ENCODE measurements at regions of chr5 and their contacts with region 1.

Region 1: GRCh38 chr5:170571875-170572852 is 68.3 kb downstream of the KCNIP1 start:
- DNase-seq: peak; percentile 90
- ATAC-seq: peak; percentile 97
- H3K4me3 Mint-ChIP-seq: no peak overlapping the region
- H3K27ac Mint-ChIP-seq: no peak overlapping the region
- H3K4me1 Mint-ChIP-seq: peaks cover 20% of the 10 kb centered on the region
- H3K27me3 Mint-ChIP-seq: peaks cover 62% of the 10 kb centered on the region

Region 2: DNA sequence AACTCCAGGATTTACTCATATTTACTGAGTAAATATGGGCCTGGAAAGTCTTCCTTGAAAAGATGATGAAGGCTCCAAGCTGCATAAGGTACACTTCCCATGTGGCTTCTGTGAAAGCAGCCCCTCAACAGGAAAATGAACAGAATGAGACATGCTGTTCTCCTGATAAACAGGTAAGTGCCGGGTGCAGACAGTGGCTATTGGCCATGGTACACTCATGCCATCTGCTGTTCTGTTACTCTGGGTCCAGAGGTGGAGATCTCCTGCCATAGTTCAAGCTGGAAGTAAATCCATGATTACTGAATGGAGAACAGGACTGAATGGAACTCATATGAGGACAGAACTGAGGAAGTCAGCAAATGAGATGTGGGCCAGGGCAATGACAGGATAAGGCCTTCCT is 1374.8 kb before region 1 on chr5:
- CTCF ChIA-PET with region 1: no interaction called
- POLR2A ChIA-PET with region 1: no interaction called
- intact Hi-C with region 1: no loop called
- DNase-seq: no peak
- ATAC-seq: no peak
- H3K4me3 Mint-ChIP-seq: no peak overlapping the region
- H3K27ac Mint-ChIP-seq: no peak overlapping the region
- H3K4me1 Mint-ChIP-seq: no peaks in the 10 kb centered on the region
- H3K27me3 Mint-ChIP-seq: no peaks in the 10 kb centered on the region

Region 3: GRCh38 chr5:170006021-170006420 is 566.1 kb before region 1 on chr5:
- CTCF ChIA-PET with region 1: no interaction called
- POLR2A ChIA-PET with region 1: no interaction called
- intact Hi-C with region 1: no loop called
- DNase-seq: no peak
- ATAC-seq: no peak
- H3K4me3 Mint-ChIP-seq: no peak overlapping the region
- H3K27ac Mint-ChIP-seq: no peak overlapping the region
- H3K4me1 Mint-ChIP-seq: no peaks in the 10 kb centered on the region
- H3K27me3 Mint-ChIP-seq: no peaks in the 10 kb centered on the region

Region 4: DNA sequence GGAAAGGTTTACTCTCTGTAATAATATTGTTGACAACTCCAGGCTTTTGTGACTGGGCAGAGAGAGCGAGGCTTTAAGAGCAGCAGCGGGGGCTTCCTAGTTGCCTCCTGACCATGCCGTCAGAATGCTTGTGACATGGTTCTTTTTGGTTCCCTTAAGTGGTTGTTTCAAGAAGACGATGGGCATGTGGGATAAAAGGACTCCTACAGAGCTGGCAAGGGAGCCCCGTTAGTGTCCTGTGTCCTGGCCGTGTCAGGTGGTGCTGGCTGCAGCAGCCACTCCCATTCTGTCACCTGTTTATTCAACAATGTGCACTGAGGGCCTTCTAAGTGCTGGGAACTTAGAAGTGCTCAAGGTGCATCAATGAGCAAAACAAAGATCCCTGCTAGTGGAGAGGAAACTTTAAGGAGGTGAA is 294.3 kb before region 1 on chr5:
- CTCF ChIA-PET with region 1: no interaction called
- POLR2A ChIA-PET with region 1: no interaction called
- intact Hi-C with region 1: no loop called
- DNase-seq: no peak
- ATAC-seq: no peak
- H3K4me3 Mint-ChIP-seq: peak overlapping the region; percentile 49
- H3K27ac Mint-ChIP-seq: peak overlapping the region; percentile 92
- H3K4me1 Mint-ChIP-seq: peaks cover 97% of the 10 kb centered on the region
- H3K27me3 Mint-ChIP-seq: no peaks in the 10 kb centered on the region

Region 5: GRCh38 chr5:170466988-170467707 is 105.0 kb before region 1 on chr5:
- CTCF ChIA-PET with region 1: no interaction called
- POLR2A ChIA-PET with region 1: no interaction called
- intact Hi-C with region 1: loop called (anchors 1 to 5 kb)
- DNase-seq: peak; percentile 74
- ATAC-seq: peak; percentile 98
- H3K4me3 Mint-ChIP-seq: no peak overlapping the region
- H3K27ac Mint-ChIP-seq: no peak overlapping the region
- H3K4me1 Mint-ChIP-seq: no peaks in the 10 kb centered on the region
- H3K27me3 Mint-ChIP-seq: peaks cover 12% of the 10 kb centered on the region

Region 6: DNA sequence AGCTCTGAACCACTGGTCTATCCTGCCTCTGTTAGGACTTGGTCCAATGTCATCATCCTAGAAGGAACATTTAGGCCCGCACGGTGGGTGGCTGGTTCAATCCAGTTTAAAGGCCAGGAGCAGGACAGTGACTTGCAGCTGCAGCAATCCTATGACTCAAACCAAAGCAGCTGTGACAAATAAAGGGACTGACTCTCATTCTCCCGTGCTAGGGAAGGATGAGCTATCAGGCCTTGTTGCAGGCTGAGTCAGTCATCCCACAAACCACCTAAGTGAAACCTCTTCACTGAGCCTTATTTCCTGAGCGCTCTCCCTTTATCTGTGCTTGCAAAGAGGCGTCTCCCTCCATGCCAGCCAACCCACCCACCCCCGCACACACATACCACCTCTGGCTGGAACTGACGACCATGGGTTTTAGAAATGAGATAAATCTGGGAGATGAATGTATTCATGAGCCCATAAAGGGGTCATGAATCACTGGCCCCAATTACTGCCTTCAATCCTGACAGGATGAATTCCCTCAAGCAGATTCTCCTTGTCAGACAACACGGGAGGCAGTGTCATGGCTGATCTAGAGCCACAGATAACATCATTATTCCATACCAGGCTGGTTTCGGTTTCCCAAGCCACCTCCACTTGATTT is 25.1 kb after region 1 on chr5:
- CTCF ChIA-PET with region 1: interaction called, 5 read pairs
- POLR2A ChIA-PET with region 1: interaction called, 9 read pairs
- intact Hi-C with region 1: loop called (anchors 1 kb)
- DNase-seq: peak; percentile 69
- ATAC-seq: peak; percentile 94
- H3K4me3 Mint-ChIP-seq: no peak overlapping the region
- H3K27ac Mint-ChIP-seq: no peak overlapping the region
- H3K4me1 Mint-ChIP-seq: peaks cover 20% of the 10 kb centered on the region
- H3K27me3 Mint-ChIP-seq: peaks cover 41% of the 10 kb centered on the region

Region 7: GRCh38 chr5:170941788-170942187 is 369.6 kb after region 1 on chr5:
- CTCF ChIA-PET with region 1: no interaction called
- POLR2A ChIA-PET with region 1: no interaction called
- intact Hi-C with region 1: no loop called
- DNase-seq: no peak
- ATAC-seq: no peak
- H3K4me3 Mint-ChIP-seq: no peak overlapping the region
- H3K27ac Mint-ChIP-seq: no peak overlapping the region
- H3K4me1 Mint-ChIP-seq: no peaks in the 10 kb centered on the region
- H3K27me3 Mint-ChIP-seq: peaks cover 5% of the 10 kb centered on the region

Measured in activated CD4-positive, alpha-beta T cell treated with anti-CD3 and anti-CD28 coated beads for 36 hours (primary cell).